ENCODE measurements at regions of chr15 and their contacts with region 1.

Region 1: DNA sequence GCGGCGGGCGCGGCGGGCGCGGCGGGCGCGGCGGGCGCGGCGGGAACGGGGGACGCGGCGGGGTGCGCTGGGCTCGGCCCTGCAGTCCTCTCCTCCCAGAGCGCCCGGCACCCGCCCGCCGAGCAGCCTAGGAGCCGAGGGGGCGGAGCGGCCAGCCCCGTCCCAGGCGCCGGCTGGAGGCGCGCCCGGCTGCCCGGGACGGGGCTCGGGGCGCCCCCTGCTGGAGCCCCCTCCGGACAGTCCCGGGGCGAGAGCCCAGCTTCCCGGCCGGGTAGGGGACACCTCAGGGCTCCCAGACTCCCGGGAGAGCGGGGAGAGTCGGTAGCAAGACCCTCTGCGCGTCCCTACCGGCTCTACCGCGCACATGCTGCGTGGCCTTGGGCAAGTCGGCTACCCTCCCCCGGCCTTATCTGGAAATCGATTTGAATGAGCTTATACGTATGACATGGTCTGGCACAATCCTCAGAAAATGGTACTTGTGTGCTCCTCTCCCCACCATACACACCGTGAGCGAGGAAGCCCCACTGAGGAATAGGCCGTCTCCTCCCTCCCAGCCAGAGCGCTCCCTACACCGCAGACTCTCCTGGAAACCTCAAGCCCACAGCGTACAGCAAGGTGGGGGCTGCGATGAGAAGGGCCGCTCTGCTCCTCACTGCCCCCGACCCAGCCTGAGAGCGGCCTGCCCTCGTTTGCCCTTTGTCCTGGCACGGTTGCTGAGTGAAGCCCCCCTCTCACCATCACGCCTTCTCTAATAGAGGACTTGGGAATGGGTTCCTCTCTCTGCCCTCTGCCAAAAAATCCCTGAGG is at the start of gene DAPK2:
- DNase-seq: peak; percentile 89
- H3K4me3 Mint-ChIP-seq: peak within 1 kb of the TSS; percentile 59
- H3K27ac Mint-ChIP-seq: no peak within 1 kb of the TSS
- H3K4me1 Mint-ChIP-seq: no peaks in the 10 kb centered on the region
- H3K27me3 Mint-ChIP-seq: peaks cover 80% of the 10 kb centered on the region
- CTCF ChIP-seq: peak; percentile 83
- total RNA-seq, gene DAPK2: 1.1 and 1.5 TPM in 2 replicates

Region 2: GRCh38 chr15:63752075-63752684 is 294.4 kb before region 1 on chr15:
- CTCF ChIA-PET with region 1: interaction called, 16 read pairs
- intact Hi-C with region 1: no loop called
- DNase-seq: peak; percentile 61
- H3K4me3 Mint-ChIP-seq: no peak overlapping the region
- H3K27ac Mint-ChIP-seq: no peak overlapping the region
- H3K4me1 Mint-ChIP-seq: no peaks in the 10 kb centered on the region
- H3K27me3 Mint-ChIP-seq: no peaks in the 10 kb centered on the region
- CTCF ChIP-seq: peak; percentile 68

Region 3: DNA sequence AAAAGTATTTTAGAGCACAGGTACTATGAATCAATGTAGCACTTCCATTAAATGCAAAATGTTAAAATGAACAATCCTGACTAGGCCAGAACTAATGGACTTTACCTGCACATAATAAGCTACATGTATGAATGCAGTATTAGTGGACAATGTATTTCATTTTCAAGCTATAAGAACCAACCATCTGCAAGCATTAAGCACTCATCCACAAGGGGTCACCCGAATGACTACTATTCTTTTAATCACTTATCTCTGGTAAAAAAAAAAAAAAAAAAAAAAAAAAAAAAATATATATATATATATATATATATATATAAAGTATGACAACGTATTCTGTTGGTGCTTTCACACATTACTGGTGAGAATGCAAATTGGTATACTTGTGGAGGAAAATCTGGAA is 220.0 kb before region 1 on chr15:
- CTCF ChIA-PET with region 1: interaction called, 11 read pairs
- intact Hi-C with region 1: no loop called
- DNase-seq: peak; percentile 16
- H3K4me3 Mint-ChIP-seq: no peak overlapping the region
- H3K27ac Mint-ChIP-seq: no peak overlapping the region
- H3K4me1 Mint-ChIP-seq: no peaks in the 10 kb centered on the region
- H3K27me3 Mint-ChIP-seq: no peaks in the 10 kb centered on the region
- CTCF ChIP-seq: no peak

Region 4: GRCh38 chr15:63945007-63945788 is 101.4 kb before region 1 on chr15:
- CTCF ChIA-PET with region 1: interaction called, 39 read pairs
- intact Hi-C with region 1: loop called (anchors 1 kb)
- DNase-seq: peak; percentile 86
- H3K4me3 Mint-ChIP-seq: no peak overlapping the region
- H3K27ac Mint-ChIP-seq: peak overlapping the region; percentile 53
- H3K4me1 Mint-ChIP-seq: peaks cover 16% of the 10 kb centered on the region
- H3K27me3 Mint-ChIP-seq: peaks cover 12% of the 10 kb centered on the region
- CTCF ChIP-seq: peak; percentile 94

Region 5: GRCh38 chr15:64010719-64011118 is 35.8 kb before region 1 on chr15:
- CTCF ChIA-PET with region 1: interaction called, 10 read pairs
- intact Hi-C with region 1: no loop called
- DNase-seq: peak; percentile 88
- H3K4me3 Mint-ChIP-seq: no peak overlapping the region
- H3K27ac Mint-ChIP-seq: peak overlapping the region; percentile 48
- H3K4me1 Mint-ChIP-seq: peaks cover 67% of the 10 kb centered on the region
- H3K27me3 Mint-ChIP-seq: no peaks in the 10 kb centered on the region
- CTCF ChIP-seq: no peak